Panc1 (cell line): ENCODE measurements at regions of chr17 and their contacts with region 1.

Region 1: DNA sequence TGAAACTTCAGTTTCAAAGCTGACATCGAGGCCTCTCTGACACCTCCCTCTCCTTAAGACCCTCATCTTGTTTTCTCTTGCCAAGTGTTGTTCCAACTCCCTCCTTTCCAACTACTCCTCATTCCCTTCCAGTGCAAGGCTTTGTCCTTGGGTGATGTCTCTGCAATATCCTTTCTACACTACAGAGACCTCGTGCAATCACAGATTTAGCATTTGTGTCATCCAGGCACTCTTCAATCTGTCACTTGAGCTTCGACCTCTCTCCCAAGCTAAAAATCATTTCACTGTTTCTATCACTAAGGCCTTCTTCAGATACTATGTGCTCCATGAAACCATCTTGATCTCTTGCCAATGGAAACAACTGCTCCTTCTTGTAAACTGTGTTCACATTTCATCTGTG is 31.6 kb downstream of the TEKT3 start:
- DNase-seq: no peak
- ATAC-seq: no peak
- H3K4me3 ChIP-seq: no peak overlapping the region
- H3K27ac ChIP-seq: no peak overlapping the region
- H3K4me1 ChIP-seq: no peaks in the 10 kb centered on the region
- H3K27me3 ChIP-seq: peaks cover 2% of the 10 kb centered on the region; the same call in 1 of the 2 replicates
- CTCF ChIP-seq: no peak

Region 2: DNA sequence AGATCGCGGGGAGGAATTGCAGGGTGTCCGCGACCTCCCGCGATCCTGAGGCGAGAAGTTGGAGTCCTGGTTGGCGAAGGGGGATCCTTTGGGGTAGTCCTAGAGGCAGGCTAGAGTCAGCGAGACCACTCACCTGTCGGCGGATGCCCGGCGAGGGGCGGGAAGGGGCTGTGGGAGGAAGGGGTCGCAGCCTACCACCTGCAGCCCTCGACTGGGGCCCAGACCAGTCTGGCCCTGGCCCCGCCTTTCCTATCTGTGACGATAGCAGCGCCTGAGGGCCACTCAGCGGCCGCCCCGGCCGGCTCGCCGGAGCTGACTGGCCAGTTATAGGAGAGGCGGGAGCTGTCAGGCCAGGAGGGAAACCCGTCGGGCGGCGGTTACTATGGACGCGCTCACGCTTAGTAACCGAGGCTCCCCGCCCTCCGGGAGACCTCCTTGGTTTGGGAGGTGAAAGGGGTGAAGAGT is 31.6 kb after region 1 on chr17 and contains the start of gene TEKT3:
- CTCF ChIA-PET with region 1: interaction called, 11 read pairs
- POLR2A ChIA-PET with region 1: no interaction called
- in situ Hi-C with region 1: no loop called
- intact Hi-C with region 1: no loop called
- DNase-seq: no peak
- ATAC-seq: peak; percentile 96
- H3K4me3 ChIP-seq: peak within 1 kb of the TSS; percentile 37 to 42
- H3K27ac ChIP-seq: no peak within 1 kb of the TSS
- H3K4me1 ChIP-seq: no peaks in the 10 kb centered on the region
- H3K27me3 ChIP-seq: peaks cover 35% of the 10 kb centered on the region
- CTCF ChIP-seq: no peak
- total RNA-seq, gene TEKT3: not detected